Activated CD8-positive, alpha-beta T cell treated with anti-CD3 and anti-CD28 coated beads, Interleukin-2, amount 10 ng/mL, durations not matched to agents 7 days and 5 days (primary cell): ENCODE measurements at regions of chr7 and their contacts with region 1.

Region 1: GRCh38 chr7:152436111-152436930 is 518 bp upstream of the KMT2C start:
- DNase-seq: peak; percentile 90
- ATAC-seq: peak; percentile 76
- H3K4me3 Mint-ChIP-seq: peak overlapping the region; percentile 76
- H3K27ac Mint-ChIP-seq: peak overlapping the region; percentile 88
- H3K4me1 Mint-ChIP-seq: peaks cover 21% of the 10 kb centered on the region
- H3K27me3 Mint-ChIP-seq: no peaks in the 10 kb centered on the region

Region 2: GRCh38 chr7:152336754-152337368 is 99.5 kb before region 1 on chr7:
- CTCF ChIA-PET with region 1: interaction called, 13 read pairs
- POLR2A ChIA-PET with region 1: no interaction called
- DNase-seq: peak; percentile 44
- ATAC-seq: peak; percentile 85
- H3K4me3 Mint-ChIP-seq: peak overlapping the region; percentile 77
- H3K27ac Mint-ChIP-seq: peak overlapping the region; percentile 49
- H3K4me1 Mint-ChIP-seq: peaks cover 24% of the 10 kb centered on the region
- H3K27me3 Mint-ChIP-seq: no peaks in the 10 kb centered on the region

Region 3: GRCh38 chr7:152463709-152464311 is 27.5 kb after region 1 on chr7:
- CTCF ChIA-PET with region 1: no interaction called
- POLR2A ChIA-PET with region 1: interaction called, 12 read pairs
- DNase-seq: peak; percentile 100
- ATAC-seq: peak; percentile 95
- H3K4me3 Mint-ChIP-seq: peak overlapping the region; percentile 89
- H3K27ac Mint-ChIP-seq: peak overlapping the region; percentile 20
- H3K4me1 Mint-ChIP-seq: peaks cover 18% of the 10 kb centered on the region
- H3K27me3 Mint-ChIP-seq: no peaks in the 10 kb centered on the region